PC-9 (cell line): ENCODE measurements at regions of chr10 and their contacts with region 1.

Region 1: GRCh38 chr10:3172446-3173170 is at the start of gene PITRM1:
- DNase-seq: peak; percentile 93 to 98
- H3K4me3 ChIP-seq: peak within 1 kb of the TSS; percentile 94
- H3K27ac ChIP-seq: peak within 1 kb of the TSS; percentile 76
- H3K4me1 ChIP-seq: peaks cover 8% of the 10 kb centered on the region
- H3K27me3 ChIP-seq: no peaks in the 10 kb centered on the region
- CTCF ChIP-seq: no peak
- total RNA-seq, gene PITRM1: 92.3 and 124 TPM in 2 replicates

Region 2: GRCh38 chr10:3077975-3078921 is 94.4 kb before region 1 on chr10:
- CTCF ChIA-PET with region 1: no interaction called
- POLR2A ChIA-PET with region 1: interaction called, 17 read pairs
- intact Hi-C with region 1: no loop called
- DNase-seq: no peak
- H3K4me3 ChIP-seq: no peak overlapping the region
- H3K27ac ChIP-seq: no peak overlapping the region
- H3K4me1 ChIP-seq: peaks cover 5% of the 10 kb centered on the region; the same call in 1 of the 2 replicates
- H3K27me3 ChIP-seq: no peaks in the 10 kb centered on the region
- CTCF ChIP-seq: no peak

Region 3: GRCh38 chr10:3141351-3142005 is 31.1 kb before region 1 on chr10:
- CTCF ChIA-PET with region 1: no interaction called
- POLR2A ChIA-PET with region 1: no interaction called
- intact Hi-C with region 1: no loop called
- DNase-seq: no peak
- H3K4me3 ChIP-seq: no peak overlapping the region
- H3K27ac ChIP-seq: no peak overlapping the region
- H3K4me1 ChIP-seq: no peaks in the 10 kb centered on the region
- H3K27me3 ChIP-seq: no peaks in the 10 kb centered on the region
- CTCF ChIP-seq: no peak

Region 4: GRCh38 chr10:3729397-3729976 is 556.9 kb after region 1 on chr10:
- CTCF ChIA-PET with region 1: no interaction called
- POLR2A ChIA-PET with region 1: no interaction called
- intact Hi-C with region 1: no loop called
- DNase-seq: peak; percentile 39 to 78
- H3K4me3 ChIP-seq: no peak overlapping the region
- H3K27ac ChIP-seq: 0 out of 2 replicates have a peak overlapping the region, but pooled peaks have one; percentile 1
- H3K4me1 ChIP-seq: peaks cover 21% of the 10 kb centered on the region
- H3K27me3 ChIP-seq: no peaks in the 10 kb centered on the region
- CTCF ChIP-seq: no peak